ENCODE measurements at regions of chr20 and their contacts with region 1.

Region 1: DNA sequence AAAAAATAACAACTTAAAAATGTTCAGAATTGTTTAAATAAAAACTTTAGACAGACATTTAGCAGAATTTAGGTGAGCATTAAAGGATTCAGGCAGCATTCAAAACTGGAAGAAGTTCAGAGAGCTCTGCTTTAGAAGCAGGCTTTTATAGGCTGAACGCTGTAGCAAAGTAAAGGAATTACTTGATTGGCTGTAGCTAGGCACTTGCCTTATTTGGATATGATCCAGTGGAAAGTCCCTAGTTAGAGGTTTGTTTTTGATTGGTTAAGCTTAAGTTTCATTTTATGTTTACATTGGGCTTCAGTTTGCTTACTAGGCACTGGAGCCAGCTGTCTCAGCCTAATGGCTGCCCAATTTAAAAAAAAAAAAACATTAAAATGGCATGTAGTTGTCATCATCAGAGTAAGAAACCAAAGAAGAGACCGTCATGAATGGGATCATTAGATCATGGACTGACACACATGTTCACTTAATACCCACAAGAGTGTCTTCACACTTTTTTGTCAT is 65.1 kb downstream of the CBFA2T2 start:
- DNase-seq: peak in 32 of 35 experiments; percentile 2 to 91 (median 34)
- ATAC-seq: peak; percentile 97 to 99 (median 98)
- H3K4me3 ChIP-seq: peak overlapping the region in 1 of 2 donors; percentile 10
- H3K4me3 Mint-ChIP-seq: peak overlapping the region; percentile 39 to 60 (median 44)
- H3K27ac ChIP-seq: peak overlapping the region; percentile 83
- H3K27ac Mint-ChIP-seq: peak overlapping the region; percentile 97 to 98
- H3K4me1 ChIP-seq: peaks cover 15 to 18% of the 10 kb centered on the region in 2 experiments
- H3K4me1 Mint-ChIP-seq: peaks cover 36 to 45% (median 43%) of the 10 kb centered on the region in 3 donors
- H3K27me3 ChIP-seq: no peaks in the 10 kb centered on the region
- H3K27me3 Mint-ChIP-seq: no peaks in the 10 kb centered on the region

Region 2: DNA sequence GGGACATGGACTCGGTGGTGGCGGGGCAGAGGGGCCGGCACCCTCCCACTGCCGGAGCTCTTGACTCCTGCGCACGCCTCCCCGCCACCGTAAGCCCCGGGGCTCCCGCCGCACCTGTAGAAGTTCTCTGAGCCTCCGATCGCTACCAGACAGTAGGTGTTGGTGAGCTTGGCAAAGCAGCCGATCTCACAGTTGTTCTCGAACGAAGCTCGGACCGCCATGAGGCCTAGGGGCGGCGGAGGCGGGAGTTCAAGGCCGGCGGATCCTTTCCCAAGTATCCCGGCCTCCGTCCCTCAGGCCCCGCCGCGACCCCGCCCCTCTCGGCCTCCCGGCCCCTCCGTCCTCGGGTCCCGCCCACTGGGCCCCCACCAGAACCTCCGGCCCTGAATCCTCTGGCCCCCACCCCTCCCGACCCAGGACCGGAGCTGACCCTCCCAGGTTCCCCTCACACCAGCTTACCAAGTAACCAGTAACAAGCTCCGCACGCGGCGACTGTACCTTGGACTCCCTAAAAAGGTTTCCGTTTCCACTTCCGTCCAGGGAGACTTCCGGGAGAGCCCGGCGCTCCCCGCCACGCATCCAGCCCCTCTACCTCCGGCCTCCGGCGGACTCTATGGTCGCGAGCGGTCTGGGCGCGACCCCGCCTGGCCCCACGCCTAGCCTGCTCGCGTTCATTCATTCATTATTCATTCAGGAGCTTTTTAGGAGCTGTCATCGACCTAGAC is 1729.5 kb after region 1 on chr20 and contains the start of gene EIF6:
- CTCF ChIA-PET with region 1: no interaction called
- POLR2A ChIA-PET with region 1: interaction called in 1 of 2 experiments, 10 read pairs
- DNase-seq: peak; percentile 28 to 74 (median 51)
- ATAC-seq: peak; percentile 80 to 91 (median 86)
- H3K4me3 ChIP-seq: peak within 1 kb of the TSS; percentile 83 to 89
- H3K4me3 Mint-ChIP-seq: peak within 1 kb of the TSS; percentile 89 to 92 (median 90)
- H3K27ac ChIP-seq: peak within 1 kb of the TSS; percentile 71
- H3K27ac Mint-ChIP-seq: peak within 1 kb of the TSS; percentile 78 to 88
- H3K4me1 ChIP-seq: peaks cover 6 to 27% of the 10 kb centered on the region in 2 experiments
- H3K4me1 Mint-ChIP-seq: peaks cover 30 to 36% (median 34%) of the 10 kb centered on the region in 3 donors
- H3K27me3 ChIP-seq: peaks cover 0 to 4% of the 10 kb centered on the region in 2 experiments
- H3K27me3 Mint-ChIP-seq: no peaks in the 10 kb centered on the region
- total RNA-seq, gene EIF6: 43.8 to 70.7 (median 69.6) TPM

Measured in T-cell (primary cell).